AG04449 (cell line): ENCODE measurements at regions of chr6 and their contacts with region 1.

Region 1: DNA sequence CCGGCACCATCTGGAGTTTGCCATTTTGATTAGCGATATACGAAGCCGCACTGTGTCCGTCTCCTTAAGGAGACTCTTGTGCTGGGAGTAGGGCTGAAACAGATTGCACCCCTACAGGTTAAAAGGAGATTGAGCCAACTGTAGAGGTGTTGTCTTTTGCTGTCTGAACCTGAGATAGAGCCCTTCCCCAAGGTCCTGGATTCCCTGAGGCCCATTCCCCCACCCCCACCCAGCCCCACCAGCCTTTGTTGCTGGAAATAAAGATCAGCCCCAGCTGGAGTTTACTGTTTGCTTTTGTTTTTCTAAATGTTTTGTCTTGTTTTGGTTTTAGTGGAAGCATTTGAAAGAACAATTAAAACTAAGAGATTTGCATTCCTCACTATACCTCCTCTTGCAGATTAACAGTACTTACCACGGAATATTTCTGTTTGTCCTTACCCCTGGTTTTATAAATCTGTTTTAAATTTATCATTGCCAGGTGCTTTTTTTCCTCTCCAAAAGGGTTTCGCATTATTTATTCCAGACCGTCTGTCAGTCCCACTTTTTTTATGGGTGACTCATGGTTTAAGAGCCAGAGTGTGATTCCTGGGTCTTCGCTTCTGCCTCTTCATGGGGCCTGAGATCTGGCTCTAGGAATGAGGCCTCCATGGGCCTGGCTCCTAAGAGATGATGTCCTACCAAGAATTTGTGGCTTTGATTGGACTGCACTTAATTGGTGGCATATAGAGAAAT is 169.2 kb downstream of the DTNBP1 start:
- DNase-seq: no peak
- H3K4me3 ChIP-seq: no peak overlapping the region
- CTCF ChIP-seq: no peak

Region 2: GRCh38 chr6:15504581-15505350 is 11.2 kb after region 1 on chr6:
- CTCF ChIA-PET with region 1: interaction called, 10 read pairs
- POLR2A ChIA-PET with region 1: no interaction called
- DNase-seq: peak; percentile 93
- H3K4me3 ChIP-seq: peak overlapping the region; percentile 48
- CTCF ChIP-seq: no peak

Region 3: GRCh38 chr6:15551798-15552197 is 58.2 kb after region 1 on chr6:
- CTCF ChIA-PET with region 1: no interaction called
- POLR2A ChIA-PET with region 1: no interaction called
- DNase-seq: no peak
- H3K4me3 ChIP-seq: no peak overlapping the region
- CTCF ChIP-seq: no peak

Region 4: GRCh38 chr6:15698471-15698870 is 204.9 kb after region 1 on chr6:
- CTCF ChIA-PET with region 1: no interaction called
- POLR2A ChIA-PET with region 1: no interaction called
- DNase-seq: no peak
- H3K4me3 ChIP-seq: no peak overlapping the region
- CTCF ChIP-seq: no peak